ENCODE measurements at regions of chr12 and their contacts with region 1.

Region 1: GRCh38 chr12:57904848-57905811 is 36.2 kb upstream of the ATP23 start:
- H3K4me3 ChIP-seq: no peak overlapping the region
- H3K27ac ChIP-seq: no peak overlapping the region
- H3K4me1 ChIP-seq: no peaks in the 10 kb centered on the region
- CTCF ChIP-seq: peak; percentile 99

Region 2: GRCh38 chr12:57803319-57803893 is 101.7 kb before region 1 on chr12:
- CTCF ChIA-PET with region 1: interaction called, 23 read pairs
- POLR2A ChIA-PET with region 1: no interaction called
- H3K4me3 ChIP-seq: no peak overlapping the region
- H3K27ac ChIP-seq: no peak overlapping the region
- H3K4me1 ChIP-seq: no peaks in the 10 kb centered on the region
- CTCF ChIP-seq: peak; percentile 60

Region 3: DNA sequence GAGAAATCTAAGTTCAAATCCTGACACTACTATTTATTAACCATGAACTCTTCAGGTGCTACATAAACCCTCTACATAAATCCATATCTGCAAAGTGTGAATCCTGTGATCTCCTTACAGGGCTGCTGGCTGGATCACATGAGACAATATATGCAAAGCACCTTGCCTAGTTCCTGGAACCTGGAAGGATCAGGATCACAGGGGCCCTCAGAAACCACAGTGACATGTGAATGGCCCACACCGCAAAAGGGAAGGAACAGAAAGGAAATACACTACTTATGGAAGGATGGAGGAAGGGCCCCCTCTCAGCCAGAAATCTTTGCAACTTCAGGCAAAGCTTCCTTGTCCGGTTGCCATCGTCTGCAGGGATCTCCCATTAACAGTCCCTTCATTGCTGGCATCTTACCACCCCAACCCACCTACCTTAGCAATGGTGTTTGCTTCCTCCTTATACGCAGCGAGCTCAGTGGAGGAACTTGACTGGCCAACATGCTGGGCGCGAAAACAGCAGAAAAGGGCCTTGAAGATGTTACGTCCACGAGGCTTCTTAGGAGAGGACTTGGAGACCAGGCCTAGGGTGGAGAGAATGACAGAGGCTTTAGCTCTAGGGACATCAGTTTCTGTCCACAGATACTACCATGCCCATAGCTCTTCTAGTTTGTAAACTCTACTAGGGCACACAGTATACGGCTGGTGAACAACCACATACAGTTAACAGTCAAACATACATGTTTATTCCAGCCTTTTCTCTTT is 75.9 kb before region 1 on chr12:
- CTCF ChIA-PET with region 1: interaction called, 120 read pairs
- POLR2A ChIA-PET with region 1: interaction called, 5 read pairs
- H3K4me3 ChIP-seq: no peak overlapping the region
- H3K27ac ChIP-seq: no peak overlapping the region
- H3K4me1 ChIP-seq: no peaks in the 10 kb centered on the region; the same call in 1 of the 2 replicates
- CTCF ChIP-seq: no peak

Region 4: DNA sequence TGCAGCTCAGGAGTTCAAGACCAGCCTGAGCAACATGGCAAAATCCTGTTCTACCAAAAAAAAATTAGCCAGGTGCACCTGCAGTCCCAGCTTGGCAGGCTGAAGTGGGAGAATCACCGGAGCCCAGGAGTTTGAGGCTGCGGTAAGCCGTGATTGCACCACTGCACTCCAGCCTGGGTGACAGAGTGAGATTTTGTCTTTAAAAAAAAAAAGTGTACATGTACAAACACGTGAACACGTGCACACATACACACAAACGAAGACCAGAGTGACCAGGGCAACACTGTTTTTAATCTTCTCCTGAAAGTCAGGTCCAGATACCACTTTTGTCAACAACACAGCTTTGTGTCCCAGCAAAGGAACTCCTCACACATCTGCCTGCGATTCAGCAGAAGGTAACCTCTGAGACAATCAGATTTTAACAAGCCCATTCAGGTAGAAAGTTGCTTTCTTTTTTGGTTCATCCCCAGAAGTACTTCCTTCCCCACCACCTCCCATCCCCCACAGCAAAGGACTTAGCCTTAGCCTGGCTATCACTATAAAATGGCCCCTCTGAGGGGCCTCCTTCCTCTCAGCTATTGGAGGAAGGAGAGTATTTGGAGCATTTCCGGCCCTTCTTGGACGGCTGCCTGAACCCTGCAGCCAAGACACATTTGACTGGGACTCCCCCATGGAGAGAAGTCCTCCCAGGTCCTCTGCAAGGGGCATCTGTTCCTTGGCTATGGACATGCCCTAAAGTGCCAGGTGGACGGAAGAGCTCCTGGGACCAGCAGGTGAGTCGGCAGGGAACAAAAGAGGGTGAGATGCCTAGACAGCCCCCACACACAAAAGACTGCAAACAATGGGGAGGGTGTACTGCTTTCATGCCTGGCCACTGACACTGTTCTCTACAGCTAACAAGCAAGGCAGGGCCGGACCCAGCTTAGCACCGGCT is 68.4 kb before region 1 on chr12:
- CTCF ChIA-PET with region 1: interaction called, 120 read pairs
- POLR2A ChIA-PET with region 1: interaction called, 5 read pairs
- H3K4me3 ChIP-seq: no peak overlapping the region
- H3K27ac ChIP-seq: peak overlapping the region; percentile 12; the same call in 1 of the 2 replicates
- H3K4me1 ChIP-seq: peaks cover 46% of the 10 kb centered on the region
- CTCF ChIP-seq: no peak

Region 5: GRCh38 chr12:57846577-57847319 is 58.4 kb before region 1 on chr12 and contains the start of gene CTDSP2:
- CTCF ChIA-PET with region 1: interaction called, 31 read pairs
- POLR2A ChIA-PET with region 1: no interaction called
- H3K4me3 ChIP-seq: peak within 1 kb of the TSS; percentile 96
- H3K27ac ChIP-seq: peak within 1 kb of the TSS; percentile 95
- H3K4me1 ChIP-seq: peaks cover 14% of the 10 kb centered on the region; the same call in 1 of the 2 replicates
- CTCF ChIP-seq: no peak

Region 6: DNA sequence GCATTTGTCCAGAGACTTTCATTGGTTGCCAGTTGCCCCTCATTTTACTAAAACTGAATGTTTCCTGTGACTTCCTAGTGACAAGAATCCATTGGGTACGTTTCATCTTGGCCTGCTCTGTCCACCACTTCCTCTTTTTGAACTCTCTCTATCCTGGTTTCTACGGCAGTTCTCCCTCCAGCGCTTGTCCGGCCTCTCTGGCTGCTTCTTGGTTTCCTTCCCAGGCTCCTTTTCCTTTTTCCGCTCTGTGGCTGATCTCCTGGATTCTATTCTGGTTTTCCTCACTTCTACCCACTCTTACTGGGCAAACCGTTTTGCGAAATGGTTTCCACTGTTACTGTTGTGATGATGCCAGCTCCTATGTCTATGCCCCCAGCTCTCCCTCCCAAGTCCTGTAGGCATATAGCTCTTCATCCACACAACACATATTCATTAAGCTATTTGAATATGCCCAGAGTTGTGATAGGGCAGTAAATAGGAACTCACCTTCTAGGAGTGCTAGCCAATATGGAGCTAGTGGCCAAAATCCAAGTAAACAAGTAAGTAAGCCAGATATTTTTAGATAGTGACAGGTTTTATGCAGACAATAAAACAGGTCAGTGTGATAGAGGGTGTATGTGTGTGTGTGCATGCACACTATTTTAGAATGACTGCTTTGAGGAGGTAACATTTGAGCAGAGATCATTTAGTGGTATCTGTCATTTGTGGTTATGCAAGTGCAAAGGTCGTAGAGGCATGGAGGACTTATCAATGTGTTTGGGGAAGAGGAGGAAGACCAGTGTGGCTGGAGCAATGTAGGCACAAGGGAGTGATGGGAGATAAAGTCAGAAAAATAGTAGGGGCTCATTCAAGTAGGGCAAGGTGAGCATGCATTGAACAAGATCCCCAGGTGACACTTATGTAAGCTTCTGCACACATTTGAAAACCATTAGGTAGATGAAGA is 30.7 kb before region 1 on chr12:
- CTCF ChIA-PET with region 1: interaction called, 11 read pairs
- POLR2A ChIA-PET with region 1: no interaction called
- H3K4me3 ChIP-seq: no peak overlapping the region
- H3K27ac ChIP-seq: no peak overlapping the region
- H3K4me1 ChIP-seq: no peaks in the 10 kb centered on the region
- CTCF ChIP-seq: no peak

Region 7: GRCh38 chr12:57888409-57889157 is 16.5 kb before region 1 on chr12:
- CTCF ChIA-PET with region 1: interaction called, 18 read pairs
- POLR2A ChIA-PET with region 1: no interaction called
- H3K4me3 ChIP-seq: no peak overlapping the region
- H3K27ac ChIP-seq: no peak overlapping the region
- H3K4me1 ChIP-seq: peaks cover 9% of the 10 kb centered on the region
- CTCF ChIP-seq: no peak